ENCODE measurements at regions of chr5 and their contacts with region 1.

Region 1: GRCh38 chr5:119022017-119022745 is 33.8 kb upstream of the DTWD2 start:
- DNase-seq: peak in 3 of 14 experiments; percentile 51 to 61 (median 59)
- ATAC-seq: peak; percentile 51
- H3K4me3 ChIP-seq: no peak overlapping the region
- H3K4me3 Mint-ChIP-seq: no peak overlapping the region
- H3K27ac ChIP-seq: no peak overlapping the region
- H3K27ac Mint-ChIP-seq: no peak overlapping the region
- H3K4me1 ChIP-seq: no peaks in the 10 kb centered on the region
- H3K4me1 Mint-ChIP-seq: no peaks in the 10 kb centered on the region
- H3K27me3 ChIP-seq: no peaks in the 10 kb centered on the region
- H3K27me3 Mint-ChIP-seq: no peaks in the 10 kb centered on the region
- CTCF ChIP-seq: peak; percentile 63

Region 2: DNA sequence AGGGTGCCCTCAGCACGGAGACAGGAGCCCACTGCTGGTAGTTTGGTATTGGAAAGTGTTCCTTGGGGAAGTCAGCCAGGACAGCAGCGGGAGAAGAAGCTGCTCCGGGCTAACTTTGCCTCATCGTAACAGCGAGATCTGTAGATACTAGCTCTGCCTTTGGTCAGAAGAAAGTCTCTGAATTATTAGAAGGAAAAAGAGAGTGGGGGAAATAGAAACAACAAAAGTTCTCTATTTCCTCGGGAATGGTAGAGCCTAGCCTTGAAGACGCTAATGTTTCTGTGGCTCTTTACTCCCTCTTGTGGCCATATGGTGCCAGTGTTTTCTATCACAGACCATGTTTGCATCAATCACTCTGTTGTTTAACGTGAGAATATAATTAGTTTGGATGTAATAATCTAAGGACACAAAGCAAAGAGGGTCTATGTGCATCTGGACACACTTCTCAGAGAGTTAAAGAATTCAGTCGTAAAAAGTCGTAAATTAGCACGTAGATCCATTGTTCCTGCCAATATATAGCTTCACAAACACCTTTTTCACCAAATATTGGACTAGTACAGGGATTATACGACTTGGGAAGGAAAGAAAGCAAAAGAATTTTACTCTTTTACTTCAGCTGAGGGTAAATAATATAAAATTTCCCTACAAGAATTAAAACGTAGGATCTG is 389.9 kb after region 1 on chr5:
- CTCF ChIA-PET with region 1: interaction called, 8 read pairs
- POLR2A ChIA-PET with region 1: interaction called, 7 read pairs
- intact Hi-C with region 1: loop called (anchors 1 kb)
- DNase-seq: peak in 13 of 14 experiments; percentile 11 to 87 (median 43)
- ATAC-seq: peak; percentile 94
- H3K4me3 ChIP-seq: peak overlapping the region; percentile 62
- H3K4me3 Mint-ChIP-seq: peak overlapping the region; percentile 85
- H3K27ac ChIP-seq: no peak overlapping the region
- H3K27ac Mint-ChIP-seq: peak overlapping the region; percentile 31
- H3K4me1 ChIP-seq: peaks cover 8% of the 10 kb centered on the region
- H3K4me1 Mint-ChIP-seq: peaks cover 20% of the 10 kb centered on the region
- H3K27me3 ChIP-seq: no peaks in the 10 kb centered on the region
- H3K27me3 Mint-ChIP-seq: no peaks in the 10 kb centered on the region
- CTCF ChIP-seq: peak; percentile 92

Region 3: GRCh38 chr5:119435436-119436132 is 413.4 kb after region 1 on chr5:
- CTCF ChIA-PET with region 1: interaction called, 4 read pairs
- POLR2A ChIA-PET with region 1: no interaction called
- intact Hi-C with region 1: loop called (anchors 1 to 2 kb)
- DNase-seq: peak; percentile 58 to 82 (median 67)
- ATAC-seq: peak; percentile 83
- H3K4me3 ChIP-seq: no peak overlapping the region
- H3K4me3 Mint-ChIP-seq: no peak overlapping the region
- H3K27ac ChIP-seq: no peak overlapping the region
- H3K27ac Mint-ChIP-seq: no peak overlapping the region
- H3K4me1 ChIP-seq: peaks cover 10% of the 10 kb centered on the region
- H3K4me1 Mint-ChIP-seq: peaks cover 7% of the 10 kb centered on the region
- H3K27me3 ChIP-seq: peaks cover 0 to 5% of the 10 kb centered on the region in 2 experiments
- H3K27me3 Mint-ChIP-seq: peaks cover 49% of the 10 kb centered on the region
- CTCF ChIP-seq: peak; percentile 65